CD14-positive monocyte (primary cell): ENCODE measurements at regions of chr7 and their contacts with region 1.

Region 1: DNA sequence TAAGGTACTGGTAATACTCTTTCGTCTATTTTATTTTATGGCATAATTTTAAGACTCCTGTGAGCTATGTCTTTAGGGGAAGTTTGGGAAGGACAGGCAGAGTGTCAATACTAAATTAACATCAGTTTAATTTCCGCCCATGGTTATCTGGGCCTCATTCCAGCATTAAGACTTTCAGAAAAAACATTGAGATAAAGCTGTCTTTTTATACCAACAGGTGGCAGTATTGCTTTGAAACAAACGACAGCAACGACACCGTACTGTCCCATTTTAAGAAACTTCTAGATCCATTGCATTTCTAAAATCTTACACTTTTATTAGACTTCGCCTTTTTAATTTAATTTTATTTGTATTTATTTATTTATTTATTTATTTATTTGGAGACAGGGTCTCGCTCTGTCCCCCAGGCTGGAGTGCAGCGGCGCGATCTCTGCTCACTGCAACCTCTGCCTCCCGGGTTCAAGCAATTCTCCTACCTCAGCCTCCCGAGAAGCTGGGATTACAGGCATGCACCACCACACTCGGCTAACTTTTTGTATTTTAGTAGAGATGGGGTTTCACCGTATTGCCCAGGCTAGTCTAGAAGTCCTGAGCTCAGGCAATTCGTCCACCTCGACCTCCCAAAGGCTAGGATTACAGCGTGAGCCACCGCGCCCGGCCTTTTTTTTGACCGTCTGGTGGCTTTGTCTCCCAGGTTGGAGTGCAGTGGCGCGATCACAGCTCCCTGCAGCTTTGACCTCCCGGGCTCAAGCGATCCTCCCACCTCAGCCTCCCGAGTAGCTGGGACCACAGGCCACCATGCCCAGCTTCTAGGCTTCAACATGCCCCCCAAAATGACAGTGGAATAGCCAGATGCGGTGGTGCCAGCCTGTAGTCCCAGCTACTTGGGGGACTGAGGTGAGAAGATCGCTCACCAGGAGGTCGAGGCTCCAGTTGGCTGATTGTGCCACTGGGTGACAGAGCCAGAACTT is 78.7 kb upstream of the C1GALT1 start:
- DNase-seq: peak; percentile 49 to 63 (median 56)
- H3K4me3 ChIP-seq: no peak overlapping the region
- H3K4me3 Mint-ChIP-seq: peak overlapping the region in 1 of 2 donors; percentile 82
- H3K27ac ChIP-seq: no peak overlapping the region
- H3K27ac Mint-ChIP-seq: peak overlapping the region in 1 of 7 donors; percentile 22
- H3K4me1 ChIP-seq: peaks cover 0 to 9% of the 10 kb centered on the region in 2 donors
- H3K4me1 Mint-ChIP-seq: peaks cover 10% of the 10 kb centered on the region
- H3K27me3 ChIP-seq: no peaks in the 10 kb centered on the region
- H3K27me3 Mint-ChIP-seq: peaks cover 0 to 4% (median 2%) of the 10 kb centered on the region in 3 donors
- CTCF ChIP-seq: peak; percentile 73

Region 2: GRCh38 chr7:7182156-7183060 is 78.8 kb after region 1 on chr7 and contains the start of gene C1GALT1:
- intact Hi-C with region 1: loop called in 1 of 2 experiments (anchors 10 kb)
- DNase-seq: peak; percentile 93 to 98 (median 97)
- H3K4me3 ChIP-seq: peak within 1 kb of the TSS; percentile 84 to 99 (median 87)
- H3K4me3 Mint-ChIP-seq: peak within 1 kb of the TSS; percentile 86 to 96
- H3K27ac ChIP-seq: peak within 1 kb of the TSS; percentile 97 to 99
- H3K27ac Mint-ChIP-seq: peak within 1 kb of the TSS; percentile 96 to 99 (median 98)
- H3K4me1 ChIP-seq: peaks cover 22 to 34% of the 10 kb centered on the region in 2 donors
- H3K4me1 Mint-ChIP-seq: peaks cover 37% of the 10 kb centered on the region
- H3K27me3 ChIP-seq: no peaks in the 10 kb centered on the region
- H3K27me3 Mint-ChIP-seq: no peaks in the 10 kb centered on the region
- CTCF ChIP-seq: peak; percentile 21
- polyA plus RNA-seq, gene C1GALT1: 12.5 to 47.7 (median 45.1) TPM

Region 3: GRCh38 chr7:7416031-7416858 is 312.6 kb after region 1 on chr7:
- intact Hi-C with region 1: loop called in 1 of 2 experiments (anchors 10 kb)
- DNase-seq: no peak
- H3K4me3 ChIP-seq: no peak overlapping the region
- H3K4me3 Mint-ChIP-seq: no peak overlapping the region
- H3K27ac ChIP-seq: no peak overlapping the region
- H3K27ac Mint-ChIP-seq: no peak overlapping the region
- H3K4me1 ChIP-seq: peaks cover 9 to 10% of the 10 kb centered on the region in 2 donors
- H3K4me1 Mint-ChIP-seq: peaks cover 17% of the 10 kb centered on the region
- H3K27me3 ChIP-seq: no peaks in the 10 kb centered on the region
- H3K27me3 Mint-ChIP-seq: peaks cover 0 to 2% (median 0%) of the 10 kb centered on the region in 3 donors
- CTCF ChIP-seq: no peak

Region 4: DNA sequence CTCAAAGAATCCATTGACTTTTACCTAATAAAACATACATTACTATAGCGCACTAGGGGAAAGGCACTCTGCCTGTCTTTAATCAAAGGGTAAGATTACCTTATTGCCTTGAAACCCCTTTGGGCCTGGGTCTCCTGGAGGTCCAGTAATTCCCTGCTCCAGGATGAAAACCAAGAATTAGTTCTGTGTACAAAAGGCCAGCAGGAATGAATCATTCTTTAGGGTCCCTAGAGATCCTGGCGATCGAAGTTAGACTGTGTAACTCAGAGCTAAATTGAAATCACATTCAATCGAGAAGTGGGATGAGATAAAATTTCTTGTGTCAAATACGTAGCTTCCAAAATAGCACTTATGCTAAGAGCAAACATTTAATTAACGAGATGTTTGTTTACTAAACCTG is 402.3 kb after region 1 on chr7:
- intact Hi-C with region 1: no loop called
- DNase-seq: no peak
- H3K4me3 ChIP-seq: no peak overlapping the region
- H3K4me3 Mint-ChIP-seq: no peak overlapping the region
- H3K27ac ChIP-seq: no peak overlapping the region
- H3K27ac Mint-ChIP-seq: no peak overlapping the region
- H3K4me1 ChIP-seq: no peaks in the 10 kb centered on the region
- H3K4me1 Mint-ChIP-seq: no peaks in the 10 kb centered on the region
- H3K27me3 ChIP-seq: no peaks in the 10 kb centered on the region
- H3K27me3 Mint-ChIP-seq: peaks cover 0 to 2% (median 0%) of the 10 kb centered on the region in 3 donors
- CTCF ChIP-seq: no peak

Region 5: GRCh38 chr7:7542251-7542835 is 438.7 kb after region 1 on chr7:
- intact Hi-C with region 1: loop called (anchors 2 to 5 kb)
- DNase-seq: no peak
- H3K4me3 ChIP-seq: no peak overlapping the region
- H3K4me3 Mint-ChIP-seq: no peak overlapping the region
- H3K27ac ChIP-seq: no peak overlapping the region
- H3K27ac Mint-ChIP-seq: no peak overlapping the region
- H3K4me1 ChIP-seq: no peaks in the 10 kb centered on the region
- H3K4me1 Mint-ChIP-seq: peaks cover 2% of the 10 kb centered on the region
- H3K27me3 ChIP-seq: no peaks in the 10 kb centered on the region
- H3K27me3 Mint-ChIP-seq: no peaks in the 10 kb centered on the region
- CTCF ChIP-seq: no peak

Region 6: DNA sequence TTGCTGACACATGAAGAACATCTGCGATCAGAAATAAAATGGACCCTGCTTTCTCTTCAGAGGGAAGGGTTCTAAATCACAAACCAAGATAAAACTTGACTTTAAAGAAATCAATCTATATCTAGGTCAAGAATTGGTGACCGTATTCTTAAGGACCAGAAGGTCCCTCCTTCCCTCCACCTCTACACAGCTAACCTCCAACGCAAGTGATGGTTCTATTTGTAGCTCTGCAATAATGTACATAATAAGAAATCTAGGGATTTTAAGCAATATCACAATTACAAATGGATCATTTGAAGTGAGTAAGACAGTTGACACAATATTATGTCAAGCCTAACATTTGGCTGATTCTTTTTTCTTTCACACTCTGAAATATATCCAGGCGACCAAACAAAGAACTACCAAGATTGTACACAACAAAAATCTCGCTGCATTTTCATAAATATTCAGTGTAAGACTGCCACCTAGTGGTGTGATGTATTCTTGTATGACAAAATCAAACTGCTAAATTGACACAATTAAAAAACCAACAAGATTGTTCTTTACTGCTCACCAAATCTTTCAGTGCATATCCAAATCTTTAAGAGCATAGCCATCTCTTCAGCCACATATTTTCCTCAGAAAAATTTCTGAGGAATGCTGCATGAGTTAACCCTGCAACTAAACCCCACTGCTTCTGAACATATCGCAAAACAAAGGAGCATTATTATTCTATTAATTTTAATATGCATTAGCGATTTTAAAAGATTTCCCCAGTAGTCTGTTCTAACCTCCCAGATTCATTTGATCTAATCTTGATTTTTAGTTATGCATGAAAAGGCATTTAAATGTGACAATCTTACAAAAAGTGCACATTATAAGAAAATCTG is 1113.8 kb after region 1 on chr7:
- intact Hi-C with region 1: no loop called
- DNase-seq: peak; percentile 35 to 61 (median 45)
- H3K4me3 ChIP-seq: no peak overlapping the region
- H3K4me3 Mint-ChIP-seq: no peak overlapping the region
- H3K27ac ChIP-seq: no peak overlapping the region
- H3K27ac Mint-ChIP-seq: no peak overlapping the region
- H3K4me1 ChIP-seq: no peaks in the 10 kb centered on the region
- H3K4me1 Mint-ChIP-seq: peaks cover 2% of the 10 kb centered on the region
- H3K27me3 ChIP-seq: no peaks in the 10 kb centered on the region
- H3K27me3 Mint-ChIP-seq: peaks cover 0 to 2% (median 0%) of the 10 kb centered on the region in 3 donors
- CTCF ChIP-seq: peak; percentile 77